ENCODE measurements at regions of chr17 and their contacts with region 1.

Region 1: GRCh38 chr17:7561028-7561575 is 617 bp upstream of the SENP3 start:
- DNase-seq: peak; percentile 95 to 97 (median 96)
- ATAC-seq: peak; percentile 83
- H3K4me3 ChIP-seq: peak overlapping the region; percentile 68 to 88
- H3K27ac ChIP-seq: peak overlapping the region; percentile 92 to 99 (median 98)
- H3K4me1 ChIP-seq: peaks cover 61% of the 10 kb centered on the region
- H3K27me3 ChIP-seq: no peaks in the 10 kb centered on the region
- CTCF ChIP-seq: peak; percentile 70 to 97 (median 95)
- POLR2A ChIP-seq: no peak

Region 2: DNA sequence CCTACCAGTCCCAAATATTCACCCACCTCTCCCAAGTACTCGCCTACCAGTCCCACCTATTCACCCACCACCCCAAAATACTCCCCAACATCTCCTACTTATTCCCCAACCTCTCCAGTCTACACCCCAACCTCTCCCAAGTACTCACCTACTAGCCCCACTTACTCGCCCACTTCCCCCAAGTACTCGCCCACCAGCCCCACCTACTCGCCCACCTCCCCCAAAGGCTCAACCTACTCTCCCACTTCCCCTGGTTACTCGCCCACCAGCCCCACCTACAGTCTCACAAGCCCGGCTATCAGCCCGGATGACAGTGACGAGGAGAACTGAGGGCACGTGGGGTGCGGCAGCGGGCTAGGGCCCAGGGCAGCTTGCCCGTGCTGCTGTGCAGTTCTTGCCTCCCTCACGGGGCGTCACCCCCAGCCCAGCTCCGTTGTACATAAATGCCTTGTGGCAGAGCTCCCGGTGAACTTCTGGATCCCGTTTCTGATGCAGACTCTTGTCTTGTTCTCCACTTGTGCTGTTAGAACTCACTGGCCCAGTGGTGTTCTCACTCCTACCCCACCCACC is 47.2 kb before region 1 on chr17:
- intact Hi-C with region 1: loop called (anchors 5 kb)
- DNase-seq: no peak
- ATAC-seq: no peak
- H3K4me3 ChIP-seq: no peak overlapping the region
- H3K27ac ChIP-seq: no peak overlapping the region
- H3K4me1 ChIP-seq: no peaks in the 10 kb centered on the region
- H3K27me3 ChIP-seq: no peaks in the 10 kb centered on the region
- CTCF ChIP-seq: no peak
- POLR2A ChIP-seq: no peak

Region 3: DNA sequence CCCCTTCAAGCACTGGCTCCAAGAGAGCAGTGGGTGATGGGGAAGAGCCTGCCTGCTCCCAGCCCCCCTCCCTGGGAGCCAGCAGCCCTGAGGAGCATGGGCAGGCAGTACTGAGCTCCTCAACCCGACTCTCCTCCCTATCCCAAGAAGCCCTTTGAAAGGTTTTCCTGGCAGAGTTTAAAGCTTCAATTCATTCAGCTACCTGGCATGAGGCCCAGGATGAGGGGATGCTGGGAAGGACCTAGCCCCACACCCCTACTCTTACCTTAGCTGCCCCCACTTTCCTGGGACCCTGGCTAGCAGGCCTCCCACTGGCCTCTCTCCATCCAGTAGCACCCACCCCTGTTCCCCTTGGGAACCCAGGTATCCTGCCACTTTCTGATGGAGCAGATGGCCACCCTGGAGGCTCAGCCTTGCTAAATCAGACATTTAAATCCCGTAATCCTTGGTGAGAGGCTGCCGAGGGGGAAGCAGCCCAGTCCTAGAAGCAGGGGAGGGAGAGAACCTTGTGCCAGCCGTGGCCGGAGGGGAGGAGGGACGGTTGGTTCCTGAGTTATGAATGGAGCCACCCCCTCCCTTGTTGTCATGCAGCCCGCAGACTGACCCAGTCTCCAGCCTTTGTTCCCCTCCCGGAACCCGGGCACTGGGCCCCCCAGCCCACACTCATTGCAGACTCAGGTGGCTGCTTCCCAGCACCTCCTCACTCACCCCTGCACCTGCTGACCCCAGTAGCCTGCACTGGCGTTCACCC is 106.7 kb after region 1 on chr17:
- intact Hi-C with region 1: no loop called
- DNase-seq: no peak
- ATAC-seq: no peak
- H3K4me3 ChIP-seq: no peak overlapping the region
- H3K27ac ChIP-seq: no peak overlapping the region
- H3K4me1 ChIP-seq: no peaks in the 10 kb centered on the region
- H3K27me3 ChIP-seq: no peaks in the 10 kb centered on the region
- CTCF ChIP-seq: no peak
- POLR2A ChIP-seq: no peak

Measured in body of pancreas (tissue), 4 donors.